Common myeloid progenitor, CD34-positive (primary cell): ENCODE measurements at regions of chr2 and their contacts with region 1.

Region 1: GRCh38 chr2:10079234-10079869 is 859 bp downstream of the CYS1 start:
- DNase-seq: peak in 2 of 3 donors; percentile 25 to 43
- H3K4me3 ChIP-seq: peak overlapping the region in 5 of 7 experiments; percentile 30 to 63 (median 53)
- H3K27ac ChIP-seq: no peak overlapping the region
- H3K4me1 ChIP-seq: peaks cover 2 to 20% (median 19%) of the 10 kb centered on the region in 4 experiments
- H3K27me3 ChIP-seq: peaks cover 2 to 96% (median 44%) of the 10 kb centered on the region in 5 experiments

Region 2: GRCh38 chr2:10097352-10098148 is 18.2 kb after region 1 on chr2:
- CTCF ChIA-PET with region 1: interaction called, 130 read pairs
- POLR2A ChIA-PET with region 1: no interaction called
- DNase-seq: peak in 1 of 3 donors; percentile 20
- H3K4me3 ChIP-seq: no peak overlapping the region
- H3K27ac ChIP-seq: no peak overlapping the region
- H3K4me1 ChIP-seq: no peaks in the 10 kb centered on the region
- H3K27me3 ChIP-seq: peaks cover 0 to 20% (median 6%) of the 10 kb centered on the region in 5 experiments